Aorta (tissue), 5 donors: ENCODE measurements at regions of chr10 and their contacts with region 1.

Region 1: GRCh38 chr10:62082729-62083411 is 181.4 kb downstream of the ARID5B start:
- DNase-seq: no peak
- ATAC-seq: peak; percentile 65
- H3K4me3 ChIP-seq: peak overlapping the region in 1 of 2 donors; percentile 18
- H3K27ac ChIP-seq: peak overlapping the region; percentile 61 to 100
- H3K4me1 ChIP-seq: peaks cover 3 to 16% of the 10 kb centered on the region in 2 donors
- H3K27me3 ChIP-seq: no peaks in the 10 kb centered on the region

Region 2: GRCh38 chr10:61832866-61833481 is 249.9 kb before region 1 on chr10:
- intact Hi-C with region 1: no loop called
- DNase-seq: no peak
- ATAC-seq: no peak
- H3K4me3 ChIP-seq: no peak overlapping the region
- H3K27ac ChIP-seq: no peak overlapping the region
- H3K4me1 ChIP-seq: peaks cover 0 to 5% of the 10 kb centered on the region in 2 donors
- H3K27me3 ChIP-seq: no peaks in the 10 kb centered on the region

Region 3: DNA sequence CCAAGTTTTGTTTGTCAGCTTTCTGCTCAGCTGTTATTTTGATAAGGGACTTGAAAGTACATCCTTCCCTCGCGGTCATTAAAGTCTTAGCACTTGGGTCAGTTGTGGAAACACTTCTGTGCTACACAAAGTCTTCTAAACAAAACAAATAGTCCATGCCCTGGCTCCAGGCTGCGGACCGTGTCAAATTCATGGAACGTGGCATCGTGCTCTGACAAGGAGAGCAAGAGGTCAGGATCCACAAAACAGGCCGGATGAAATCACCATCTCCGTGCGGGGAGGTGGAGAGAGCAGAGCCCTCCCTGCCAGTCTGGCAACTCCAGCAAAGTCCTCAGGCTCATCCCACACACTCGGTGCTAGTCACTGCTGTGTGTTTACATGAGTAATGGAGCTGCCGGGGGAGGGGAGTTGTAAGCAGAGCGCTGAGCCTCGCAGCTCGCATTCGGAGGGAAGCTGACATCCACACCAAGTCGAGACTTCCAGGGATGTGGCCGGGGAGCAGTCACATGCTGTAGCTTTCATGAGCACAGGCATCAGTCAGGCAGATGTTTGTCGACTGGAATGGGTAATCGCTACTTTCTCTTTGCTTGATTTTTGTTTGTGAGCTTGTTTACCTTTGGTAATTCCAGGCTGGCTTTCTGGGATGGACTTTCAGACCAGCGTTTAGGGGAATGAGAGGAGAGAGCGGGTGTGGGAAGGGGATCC is 33.8 kb before region 1 on chr10:
- intact Hi-C with region 1: loop called in 1 of 2 experiments (anchors 5 kb)
- DNase-seq: peak; percentile 91 to 94
- ATAC-seq: peak; percentile 90
- H3K4me3 ChIP-seq: peak overlapping the region; percentile 14 to 99
- H3K27ac ChIP-seq: peak overlapping the region; percentile 87 to 96
- H3K4me1 ChIP-seq: peaks cover 7 to 9% of the 10 kb centered on the region in 2 donors
- H3K27me3 ChIP-seq: no peaks in the 10 kb centered on the region

Region 4: DNA sequence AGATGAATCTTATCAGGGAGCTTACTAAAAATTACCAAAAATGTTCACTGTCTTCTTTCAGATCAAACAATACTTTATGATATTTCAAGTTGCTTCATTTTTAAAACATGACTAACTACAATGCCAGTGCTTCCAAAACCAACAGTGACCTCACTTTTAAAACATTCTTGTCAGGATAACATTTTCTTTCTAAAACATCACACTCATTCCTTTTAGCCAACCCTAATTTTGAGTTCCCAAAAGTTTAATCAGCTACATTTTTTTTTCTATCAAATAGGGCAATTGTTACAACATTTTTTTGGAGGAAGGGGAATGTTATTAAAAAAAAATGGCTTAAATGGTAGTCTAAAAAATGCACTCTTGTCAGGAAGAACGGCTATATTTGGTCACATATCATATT is 148.5 kb after region 1 on chr10:
- intact Hi-C with region 1: loop called in 1 of 2 experiments (anchors 5 kb)
- DNase-seq: no peak
- ATAC-seq: peak; percentile 78
- H3K4me3 ChIP-seq: no peak overlapping the region
- H3K27ac ChIP-seq: no peak overlapping the region
- H3K4me1 ChIP-seq: peaks cover 0 to 2% of the 10 kb centered on the region in 2 donors
- H3K27me3 ChIP-seq: no peaks in the 10 kb centered on the region